ENCODE measurements at regions of chr19 and their contacts with region 1.

Region 1: DNA sequence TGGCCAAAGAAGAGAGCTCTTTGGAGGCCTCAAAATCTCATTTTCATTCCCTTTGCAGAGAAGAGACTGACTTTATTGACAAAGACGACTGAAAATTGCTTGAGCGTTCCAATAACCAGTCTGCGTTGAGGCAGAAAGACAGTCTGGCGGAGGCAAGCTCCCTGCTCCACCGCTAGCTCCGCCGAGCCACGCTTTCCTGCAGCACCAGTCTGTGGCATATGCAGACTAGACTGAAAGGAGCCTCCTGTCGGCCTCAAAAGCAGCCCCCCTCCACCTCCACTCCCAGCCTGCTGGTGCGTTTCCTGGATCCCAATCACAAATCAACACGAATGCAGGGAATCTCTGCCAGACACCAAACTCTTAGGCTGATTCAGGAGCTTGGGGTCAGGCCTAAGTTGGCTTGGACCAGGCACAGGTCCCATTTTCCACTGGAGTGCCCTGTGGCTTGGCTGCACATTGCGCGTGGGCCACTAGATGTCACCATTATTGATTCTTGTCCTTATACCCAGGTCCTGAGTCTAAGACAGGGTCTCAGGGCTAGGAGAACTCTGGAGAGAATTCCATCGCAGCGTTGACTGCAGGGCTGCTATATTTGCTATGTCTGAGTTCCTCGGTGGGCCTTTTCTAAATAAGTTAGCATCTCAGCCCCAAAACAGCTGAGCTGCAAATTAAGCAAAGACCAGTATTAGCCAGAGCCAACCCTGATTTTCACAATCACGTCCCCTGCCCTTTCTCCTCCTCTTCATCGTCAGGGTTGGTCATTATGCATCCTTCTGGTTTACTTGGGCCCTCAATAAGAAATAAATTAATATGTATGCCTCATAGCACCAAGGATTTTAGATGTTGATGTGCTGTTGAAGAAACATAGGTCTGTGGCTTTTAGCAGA is 5.2 kb upstream of the ZNF507 start:
- DNase-seq: peak; percentile 55 to 68
- ATAC-seq: peak; percentile 73 to 86 (median 84)
- H3K4me3 ChIP-seq: no peak overlapping the region
- H3K27ac ChIP-seq: no peak overlapping the region
- H3K4me1 ChIP-seq: no peaks in the 10 kb centered on the region
- H3K27me3 ChIP-seq: no peaks in the 10 kb centered on the region
- CTCF ChIP-seq: peak; percentile 70

Region 2: GRCh38 chr19:32041681-32042292 is 298.4 kb before region 1 on chr19:
- intact Hi-C with region 1: no loop called
- DNase-seq: peak in 1 of 2 donors; percentile 22
- ATAC-seq: no peak
- H3K4me3 ChIP-seq: no peak overlapping the region
- H3K27ac ChIP-seq: no peak overlapping the region
- H3K4me1 ChIP-seq: no peaks in the 10 kb centered on the region
- H3K27me3 ChIP-seq: peaks cover 4 to 35% (median 5%) of the 10 kb centered on the region in 3 donors
- CTCF ChIP-seq: peak; percentile 42

Region 3: GRCh38 chr19:32363197-32363596 is 23.0 kb after region 1 on chr19:
- intact Hi-C with region 1: loop called in 1 of 2 experiments (anchors 2 kb)
- DNase-seq: no peak
- ATAC-seq: peak in 1 of 4 donors; percentile 44
- H3K4me3 ChIP-seq: no peak overlapping the region
- H3K27ac ChIP-seq: peak overlapping the region; percentile 64
- H3K4me1 ChIP-seq: peaks cover 22% of the 10 kb centered on the region
- H3K27me3 ChIP-seq: no peaks in the 10 kb centered on the region
- CTCF ChIP-seq: no peak

Region 4: DNA sequence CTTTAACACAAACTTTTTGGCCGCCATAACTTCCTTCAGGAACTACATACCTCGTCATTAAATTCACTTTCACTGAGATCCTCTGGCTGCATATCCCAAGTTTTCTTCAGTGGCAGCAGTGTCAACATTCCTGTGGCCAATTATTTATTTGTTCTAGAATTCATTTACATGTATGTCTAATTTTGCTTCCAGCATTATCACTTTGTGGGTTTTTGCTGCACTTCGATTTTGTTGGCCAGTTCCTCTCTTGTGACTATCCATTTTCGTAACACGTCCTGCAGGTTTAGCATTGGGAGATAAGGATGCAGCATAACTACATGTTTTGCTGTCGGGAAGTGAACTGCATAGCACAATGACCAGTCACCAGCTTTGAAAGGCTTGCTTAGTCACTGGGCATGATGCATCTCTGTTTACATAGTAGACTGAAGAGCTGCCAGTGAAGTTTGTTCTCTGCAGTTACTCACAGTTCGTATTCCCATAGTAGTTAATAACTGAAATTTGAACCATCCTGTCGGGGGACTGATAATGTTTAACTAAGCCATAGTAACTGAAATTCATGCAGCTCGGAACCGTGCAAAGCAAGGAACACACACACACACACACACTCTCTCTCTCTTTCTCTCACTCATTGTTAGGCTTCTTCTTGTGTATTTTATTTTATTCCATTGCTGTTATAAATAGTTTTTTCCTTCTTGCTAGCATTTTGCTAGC is 33.5 kb after region 1 on chr19:
- intact Hi-C with region 1: loop called in 1 of 2 experiments (anchors 2 kb)
- DNase-seq: no peak
- ATAC-seq: peak; percentile 99 to 100 (median 99)
- H3K4me3 ChIP-seq: peak overlapping the region; percentile 17
- H3K27ac ChIP-seq: peak overlapping the region; percentile 89
- H3K4me1 ChIP-seq: peaks cover 29% of the 10 kb centered on the region
- H3K27me3 ChIP-seq: no peaks in the 10 kb centered on the region
- CTCF ChIP-seq: no peak

Region 5: DNA sequence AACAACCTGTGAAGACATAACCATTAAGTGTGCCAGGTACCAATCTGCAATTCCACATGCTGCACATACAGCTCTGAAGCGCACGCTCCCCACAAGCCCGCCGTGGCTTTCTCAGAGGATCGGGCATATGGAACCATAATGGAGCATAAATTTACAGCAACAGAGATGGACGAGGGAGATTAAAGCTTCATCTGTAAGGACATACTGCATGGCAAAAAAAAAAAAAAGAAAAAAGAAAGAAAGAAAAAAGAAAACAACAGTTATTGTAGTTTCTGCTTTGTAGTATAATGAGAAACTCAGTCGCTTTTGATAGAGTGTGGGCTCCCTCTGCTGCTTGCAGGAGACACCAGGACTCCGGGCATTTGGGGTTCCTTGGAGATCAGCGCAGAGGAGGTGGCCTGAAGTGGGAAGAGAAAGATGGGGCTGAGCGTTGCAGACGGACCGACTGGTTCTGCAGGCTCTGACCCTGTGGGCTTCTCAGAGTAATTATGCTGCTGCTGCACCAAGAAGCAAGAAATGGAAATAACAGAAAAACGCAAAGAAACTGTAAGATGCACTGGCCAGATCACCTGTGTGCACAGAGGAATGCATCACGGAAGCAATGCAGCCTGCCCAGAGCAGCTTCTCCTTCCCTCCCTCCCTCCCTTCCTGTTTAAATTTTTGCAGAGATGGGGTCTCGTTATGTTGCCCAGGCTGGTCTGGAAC is 230.0 kb after region 1 on chr19:
- intact Hi-C with region 1: loop called (anchors 5 kb)
- DNase-seq: peak in 1 of 2 donors; percentile 9
- ATAC-seq: peak in 2 of 4 donors; percentile 51 to 70
- H3K4me3 ChIP-seq: no peak overlapping the region
- H3K27ac ChIP-seq: no peak overlapping the region
- H3K4me1 ChIP-seq: no peaks in the 10 kb centered on the region
- H3K27me3 ChIP-seq: peaks cover 0 to 15% (median 6%) of the 10 kb centered on the region in 3 donors
- CTCF ChIP-seq: peak; percentile 50

Measured in psoas muscle (tissue), 8 donors.